Common myeloid progenitor, CD34-positive (primary cell): ENCODE measurements at regions of chr18 and their contacts with region 1.

Region 1: DNA sequence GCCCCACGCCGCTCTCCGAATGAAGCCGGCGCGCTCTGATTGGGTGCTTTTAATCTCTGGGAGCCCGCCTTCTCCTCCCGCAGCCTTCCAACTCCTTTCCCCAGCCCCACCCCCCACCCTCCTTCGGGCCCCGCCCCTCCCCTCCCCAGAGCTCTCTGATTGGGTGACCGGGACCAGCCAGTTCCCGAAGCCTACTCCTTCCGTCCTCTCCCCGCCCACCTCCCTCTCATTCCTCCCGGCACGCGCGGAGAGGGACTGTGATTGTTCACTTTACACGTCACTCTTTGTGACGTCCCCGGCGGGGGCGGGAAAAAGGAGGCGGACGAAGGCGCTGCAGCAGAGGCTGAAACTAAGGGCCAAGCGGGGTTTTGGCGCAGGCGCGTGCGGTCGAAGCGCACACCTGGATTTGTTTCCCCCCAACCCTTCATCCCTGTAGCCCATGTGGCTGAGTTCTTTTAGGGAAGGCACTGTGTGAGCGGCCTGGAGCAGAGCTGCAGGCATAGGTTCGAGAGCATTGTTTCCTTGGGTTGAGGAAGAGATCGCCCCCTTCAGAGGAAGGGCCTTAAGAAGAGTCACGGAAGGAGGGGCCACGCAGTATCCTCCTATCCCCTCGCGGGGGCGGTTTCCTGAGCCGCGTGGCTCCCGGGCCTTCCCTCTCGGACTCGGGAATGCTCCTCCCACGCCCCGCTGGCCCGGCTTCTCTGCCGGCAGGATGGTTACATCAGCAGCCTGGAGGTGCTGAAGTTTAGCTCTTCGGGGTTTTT is at the start of gene MEX3C:
- DNase-seq: peak; percentile 99
- H3K4me3 ChIP-seq: peak within 1 kb of the TSS; percentile 84 to 99 (median 89)
- H3K27ac ChIP-seq: peak within 1 kb of the TSS; percentile 79 to 87
- H3K4me1 ChIP-seq: peaks cover 8 to 27% (median 19%) of the 10 kb centered on the region in 4 experiments
- H3K27me3 ChIP-seq: no peaks in the 10 kb centered on the region

Region 2: GRCh38 chr18:51185075-51185474 is 12.8 kb before region 1 on chr18:
- CTCF ChIA-PET with region 1: interaction called, 29 read pairs
- POLR2A ChIA-PET with region 1: no interaction called
- DNase-seq: no peak
- H3K4me3 ChIP-seq: no peak overlapping the region
- H3K27ac ChIP-seq: no peak overlapping the region
- H3K4me1 ChIP-seq: peaks cover 0 to 5% (median 1%) of the 10 kb centered on the region in 4 experiments
- H3K27me3 ChIP-seq: no peaks in the 10 kb centered on the region